Mucosa of descending colon (tissue), 3 donors: ENCODE measurements at regions of chr7 and their contacts with region 1.

Region 1: DNA sequence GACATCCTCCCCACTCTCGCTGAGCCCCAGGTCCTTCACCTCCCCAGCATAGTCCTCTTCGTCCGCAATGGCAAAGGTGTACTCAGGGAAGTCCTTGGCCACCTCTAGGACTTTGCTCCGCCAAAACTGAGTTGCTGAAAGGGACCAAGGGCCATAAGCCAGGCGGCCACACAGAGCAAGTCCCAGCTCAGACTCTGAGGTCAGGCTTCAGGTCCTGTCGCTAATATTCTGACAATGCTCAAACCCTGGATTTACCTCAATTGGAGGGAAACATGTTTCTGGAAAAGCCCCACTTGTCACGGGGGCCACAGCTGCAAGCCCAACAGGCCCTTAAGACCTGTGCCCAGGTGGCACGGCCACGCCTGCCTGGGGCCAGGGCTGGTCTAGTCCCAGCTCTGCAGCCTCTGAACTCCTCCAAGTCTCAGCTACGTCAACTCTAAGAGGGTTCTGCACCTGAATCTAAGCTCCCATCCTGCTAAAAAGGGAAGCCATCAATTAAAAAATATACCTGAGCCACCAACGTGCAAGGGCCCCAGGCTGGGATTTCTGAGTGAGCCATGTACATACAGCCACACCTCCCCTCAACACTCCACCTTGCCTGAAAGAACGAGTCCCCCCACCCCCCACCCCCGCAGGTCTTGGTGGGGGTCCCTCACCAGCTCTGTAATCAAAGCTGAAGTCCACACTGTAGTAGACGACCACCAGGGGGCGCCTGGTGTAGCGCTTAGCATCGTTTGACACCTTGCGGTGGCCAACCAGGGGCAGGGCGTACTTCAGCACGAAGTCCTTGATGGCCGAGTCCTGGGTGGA is 22.9 kb downstream of the PDIA4 start:
- DNase-seq: peak; percentile 74 to 92 (median 81)
- ATAC-seq: peak; percentile 86
- H3K4me3 ChIP-seq: no peak overlapping the region
- H3K4me1 ChIP-seq: no peaks in the 10 kb centered on the region
- CTCF ChIP-seq: peak; percentile 57

Region 2: DNA sequence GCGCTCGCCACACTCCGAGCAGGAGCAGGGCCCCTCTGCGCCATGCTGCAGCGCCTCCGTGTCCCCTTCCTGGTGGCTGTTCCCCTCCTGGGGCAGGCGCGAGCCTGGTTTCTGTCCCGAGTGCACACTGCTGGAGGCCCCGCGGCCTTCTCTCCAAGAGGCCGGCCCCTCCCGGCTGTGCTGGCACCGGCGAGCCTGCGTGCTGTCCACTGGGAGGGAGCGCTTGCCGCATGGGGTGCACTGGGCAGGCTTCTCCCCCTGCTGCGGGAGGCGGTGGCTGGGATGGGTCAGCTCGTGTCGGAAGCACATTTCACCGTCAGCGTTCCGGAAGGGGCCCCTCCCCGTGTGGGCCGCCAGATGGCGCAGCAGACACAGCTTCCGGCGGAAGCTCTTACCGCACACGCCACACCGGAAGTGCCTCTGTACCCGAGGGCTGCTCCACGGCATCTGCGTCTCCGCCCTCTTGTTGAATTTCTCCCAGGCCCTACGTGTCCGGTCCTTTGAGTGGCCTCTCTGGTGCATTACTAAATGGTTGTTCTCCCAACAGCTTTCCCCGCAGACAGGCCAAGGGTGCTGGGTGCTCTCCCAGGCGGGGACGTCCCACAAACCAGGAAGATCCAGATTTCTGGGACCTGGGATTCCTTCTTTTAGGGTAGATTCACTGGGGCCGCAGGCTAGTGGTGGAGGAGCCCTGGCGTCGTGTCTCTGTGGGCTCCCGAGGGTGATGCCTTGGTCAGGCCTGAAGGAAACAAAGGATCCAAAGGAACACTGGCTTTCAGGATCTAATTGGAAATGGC is 66.4 kb after region 1 on chr7:
- intact Hi-C with region 1: loop called in 1 of 2 experiments (anchors 10 kb)
- DNase-seq: peak in 2 of 3 donors; percentile 29 to 62
- ATAC-seq: peak; percentile 55
- H3K4me3 ChIP-seq: no peak overlapping the region
- H3K4me1 ChIP-seq: no peaks in the 10 kb centered on the region
- CTCF ChIP-seq: no peak

Region 3: DNA sequence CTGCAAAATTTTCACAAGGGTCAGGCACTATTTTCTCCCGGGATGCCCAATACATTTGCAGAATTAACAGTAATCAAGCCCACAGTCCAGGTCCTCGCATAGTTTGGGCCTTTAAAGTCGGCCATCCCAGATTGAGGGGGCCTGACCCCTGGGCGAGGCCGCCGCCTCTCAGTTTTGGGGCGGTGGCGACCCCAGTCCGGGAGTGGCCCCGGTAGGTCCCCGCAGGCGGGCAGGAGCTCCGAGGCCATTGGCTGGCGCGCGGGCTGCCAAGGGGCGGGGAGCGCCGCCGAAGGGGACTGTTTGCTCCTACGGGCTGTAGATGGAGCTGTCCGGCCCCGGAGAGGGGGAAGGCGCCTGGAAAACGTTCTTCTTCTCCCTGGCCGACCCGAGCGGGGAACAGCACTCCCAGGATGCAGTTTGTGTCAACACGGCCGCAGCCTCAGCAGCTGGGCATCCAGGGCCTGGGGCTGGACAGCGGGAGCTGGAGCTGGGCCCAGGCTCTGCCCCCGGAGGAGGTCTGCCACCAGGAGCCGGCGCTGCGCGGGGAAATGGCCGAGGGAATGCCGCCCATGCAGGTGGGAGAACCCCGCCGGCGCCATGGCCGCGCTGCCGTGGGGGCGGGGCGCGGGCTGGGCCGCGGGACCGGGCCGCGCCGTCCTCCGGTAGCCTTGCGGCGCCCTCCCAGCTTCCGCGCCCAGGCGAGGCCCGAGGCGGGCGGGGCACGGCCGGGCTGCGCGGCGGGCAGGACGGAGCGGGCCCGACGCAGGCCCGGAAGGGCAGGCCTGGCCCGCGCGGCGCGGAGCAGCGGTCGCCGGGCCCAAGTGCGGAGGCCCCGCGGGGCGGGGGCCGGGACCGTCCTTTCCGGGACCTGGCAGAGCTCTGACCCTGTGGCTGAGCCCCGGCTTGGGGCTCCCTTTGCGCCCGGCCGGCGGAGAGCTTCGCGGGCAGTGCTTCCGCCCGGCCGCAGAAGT is 190.0 kb after region 1 on chr7 and contains the start of gene ZNF282:
- intact Hi-C with region 1: no loop called
- DNase-seq: peak; percentile 90 to 91 (median 91)
- ATAC-seq: peak; percentile 91
- H3K4me3 ChIP-seq: peak within 1 kb of the TSS; percentile 63
- H3K4me1 ChIP-seq: peaks cover 26% of the 10 kb centered on the region
- CTCF ChIP-seq: peak; percentile 63
- total RNA-seq, gene ZNF282: 22.0 to 32.4 (median 28.1) TPM